ENCODE measurements at regions of chr9 and their contacts with region 1.

Region 1: DNA sequence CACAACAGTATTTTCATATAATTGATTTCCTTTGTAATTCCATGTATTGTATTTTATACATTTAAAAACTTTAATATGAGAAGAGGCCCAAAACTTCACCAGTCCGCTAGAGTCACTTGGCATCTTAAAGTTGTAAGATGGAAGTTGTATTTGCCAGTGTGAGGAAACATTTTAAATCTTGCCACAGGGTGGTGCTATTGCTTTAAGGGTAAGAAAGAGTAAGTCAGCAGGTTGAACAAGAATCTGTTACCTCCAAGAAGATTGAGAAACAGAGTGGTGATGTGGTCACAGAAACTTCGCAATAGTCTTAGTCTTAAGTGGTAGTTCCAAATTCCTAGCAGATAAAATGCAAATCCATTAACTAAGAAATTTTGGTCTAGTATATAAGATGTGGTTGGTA is 39.8 kb upstream of the RANBP6 start:
- DNase-seq: peak; percentile 58
- ATAC-seq: peak; percentile 67
- H3K4me3 Mint-ChIP-seq: no peak overlapping the region
- H3K27ac Mint-ChIP-seq: no peak overlapping the region
- H3K4me1 Mint-ChIP-seq: peaks cover 3% of the 10 kb centered on the region
- H3K27me3 Mint-ChIP-seq: peaks cover 2% of the 10 kb centered on the region
- CTCF ChIP-seq: peak; percentile 60

Region 2: DNA sequence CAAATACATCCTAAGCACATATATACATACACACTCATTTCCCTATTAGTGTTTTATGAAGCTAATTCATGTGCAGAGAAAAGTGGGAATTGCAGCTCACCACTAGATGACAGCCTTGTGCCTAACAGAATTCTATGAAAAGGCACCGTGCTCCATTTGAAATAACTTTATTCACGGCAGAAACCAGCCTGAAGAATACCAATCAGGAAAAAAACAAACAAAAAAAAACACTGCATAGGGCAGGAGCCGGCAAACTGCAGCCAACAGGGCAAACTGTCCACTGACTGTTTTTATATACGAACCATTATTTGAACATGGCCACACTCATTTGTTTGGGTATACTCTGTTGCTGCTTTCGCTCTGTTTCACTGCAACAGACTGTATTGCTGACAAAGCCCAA is 255.9 kb before region 1 on chr9:
- CTCF ChIA-PET with region 1: interaction called, 3 read pairs
- POLR2A ChIA-PET with region 1: no interaction called
- intact Hi-C with region 1: loop called (anchors 5 kb)
- DNase-seq: peak; percentile 25
- ATAC-seq: no peak
- H3K4me3 Mint-ChIP-seq: no peak overlapping the region
- H3K27ac Mint-ChIP-seq: peak overlapping the region; percentile 55
- H3K4me1 Mint-ChIP-seq: peaks cover 34% of the 10 kb centered on the region
- H3K27me3 Mint-ChIP-seq: no peaks in the 10 kb centered on the region
- CTCF ChIP-seq: peak; percentile 43

Region 3: DNA sequence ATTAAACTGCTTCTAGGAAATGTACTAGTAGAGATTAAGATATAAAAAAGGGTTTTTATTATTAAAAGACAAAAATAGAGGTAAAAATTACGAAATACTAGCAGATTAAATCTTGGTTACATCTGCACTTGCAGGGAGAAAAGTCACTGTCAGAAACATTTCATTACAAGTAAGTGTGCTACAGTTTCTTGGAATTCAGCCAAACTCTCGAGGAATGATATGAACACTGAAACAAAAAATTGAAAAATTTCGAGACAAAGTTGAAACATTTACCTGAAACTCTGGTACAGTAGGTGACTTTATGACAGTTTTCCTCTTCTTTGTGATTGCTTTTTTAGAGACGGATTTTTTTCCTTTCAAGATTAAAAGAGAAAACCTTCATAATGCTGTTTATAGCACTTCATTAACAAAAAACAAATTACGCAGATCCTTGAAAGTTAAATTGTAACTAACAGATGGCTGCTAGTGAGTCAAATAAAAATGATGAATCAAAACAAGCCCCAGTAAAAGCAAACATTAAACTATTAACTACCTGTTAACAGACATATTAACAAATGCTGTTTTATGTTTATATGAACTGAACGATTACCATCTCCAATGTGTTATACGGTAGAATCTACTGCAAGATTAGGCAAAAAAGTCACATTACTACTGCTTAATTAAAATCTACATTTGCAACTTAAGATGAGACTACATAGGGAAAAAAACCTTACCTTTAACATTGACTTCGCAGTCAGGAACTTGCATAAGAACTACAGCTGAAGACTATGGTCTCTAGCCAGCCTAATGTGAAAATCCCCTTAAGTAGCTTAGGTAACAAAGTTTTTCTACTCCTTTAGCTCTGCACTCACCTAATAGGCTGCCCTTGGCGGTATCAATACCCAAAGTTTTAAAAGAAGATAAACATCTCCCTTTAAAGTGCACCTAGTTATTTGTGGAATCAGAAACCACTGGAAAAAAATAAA is 101.2 kb before region 1 on chr9:
- CTCF ChIA-PET with region 1: no interaction called
- POLR2A ChIA-PET with region 1: no interaction called
- intact Hi-C with region 1: no loop called
- DNase-seq: no peak
- ATAC-seq: no peak
- H3K4me3 Mint-ChIP-seq: no peak overlapping the region
- H3K27ac Mint-ChIP-seq: no peak overlapping the region
- H3K4me1 Mint-ChIP-seq: peaks cover 11% of the 10 kb centered on the region
- H3K27me3 Mint-ChIP-seq: no peaks in the 10 kb centered on the region
- CTCF ChIP-seq: no peak

Region 4: GRCh38 chr9:6008169-6008979 is 46.8 kb before region 1 on chr9:
- CTCF ChIA-PET with region 1: interaction called, 14 read pairs
- POLR2A ChIA-PET with region 1: no interaction called
- intact Hi-C with region 1: no loop called
- DNase-seq: peak; percentile 97
- ATAC-seq: peak; percentile 81
- H3K4me3 Mint-ChIP-seq: peak overlapping the region; percentile 96
- H3K27ac Mint-ChIP-seq: peak overlapping the region; percentile 84
- H3K4me1 Mint-ChIP-seq: peaks cover 60% of the 10 kb centered on the region
- H3K27me3 Mint-ChIP-seq: no peaks in the 10 kb centered on the region
- CTCF ChIP-seq: no peak

Region 5: DNA sequence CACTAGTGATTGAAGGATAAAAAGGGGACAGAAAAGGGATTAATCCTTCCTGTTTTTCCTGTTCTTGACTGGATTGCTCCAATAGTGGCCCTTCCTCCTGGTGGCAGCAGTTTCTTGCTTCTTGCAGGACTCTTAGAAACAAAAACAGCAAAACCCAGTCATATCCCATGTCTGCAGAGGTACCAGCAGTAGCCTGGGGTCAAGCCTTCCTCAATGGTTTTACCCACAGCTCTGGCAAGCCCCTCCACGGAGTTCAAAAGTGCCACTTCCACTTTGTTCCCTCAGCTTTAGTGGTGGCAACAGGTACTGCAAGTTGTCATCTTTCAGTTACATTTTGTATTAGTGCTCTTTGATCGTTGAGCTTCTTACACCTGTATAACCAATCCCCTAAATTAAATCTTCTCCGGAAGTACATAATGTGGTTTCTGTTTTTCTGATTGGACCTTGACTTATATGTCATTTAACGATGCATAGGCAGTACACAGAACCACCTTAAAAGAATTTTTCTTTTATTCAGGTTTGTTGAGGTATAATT is 31.1 kb before region 1 on chr9:
- CTCF ChIA-PET with region 1: interaction called, 14 read pairs
- POLR2A ChIA-PET with region 1: no interaction called
- intact Hi-C with region 1: no loop called
- DNase-seq: peak; percentile 54
- ATAC-seq: peak; percentile 90
- H3K4me3 Mint-ChIP-seq: no peak overlapping the region
- H3K27ac Mint-ChIP-seq: no peak overlapping the region
- H3K4me1 Mint-ChIP-seq: peaks cover 5% of the 10 kb centered on the region
- H3K27me3 Mint-ChIP-seq: peaks cover 1% of the 10 kb centered on the region
- CTCF ChIP-seq: peak; percentile 73

Region 6: DNA sequence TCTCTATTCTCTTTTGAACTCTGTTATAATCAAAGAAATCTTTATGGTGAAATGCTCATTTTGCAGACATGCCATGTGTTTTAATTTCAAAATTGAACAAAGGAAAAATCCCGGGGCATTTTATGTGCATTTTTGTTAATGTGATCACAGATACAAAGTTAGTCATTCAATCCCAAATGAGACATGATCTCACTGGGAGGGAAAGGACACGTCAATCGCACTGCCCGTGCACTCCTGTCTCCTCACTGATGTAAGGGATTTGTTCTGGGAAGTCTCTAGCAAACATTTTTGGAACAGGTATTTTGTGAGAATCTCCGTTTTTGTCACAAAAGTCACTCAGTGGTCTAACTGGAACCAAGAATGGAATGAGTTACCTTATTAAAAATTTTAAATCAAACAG is 58.1 kb after region 1 on chr9:
- CTCF ChIA-PET with region 1: no interaction called
- POLR2A ChIA-PET with region 1: no interaction called
- intact Hi-C with region 1: no loop called
- DNase-seq: no peak
- ATAC-seq: no peak
- H3K4me3 Mint-ChIP-seq: no peak overlapping the region
- H3K27ac Mint-ChIP-seq: no peak overlapping the region
- H3K4me1 Mint-ChIP-seq: no peaks in the 10 kb centered on the region
- H3K27me3 Mint-ChIP-seq: no peaks in the 10 kb centered on the region
- CTCF ChIP-seq: no peak

Region 7: DNA sequence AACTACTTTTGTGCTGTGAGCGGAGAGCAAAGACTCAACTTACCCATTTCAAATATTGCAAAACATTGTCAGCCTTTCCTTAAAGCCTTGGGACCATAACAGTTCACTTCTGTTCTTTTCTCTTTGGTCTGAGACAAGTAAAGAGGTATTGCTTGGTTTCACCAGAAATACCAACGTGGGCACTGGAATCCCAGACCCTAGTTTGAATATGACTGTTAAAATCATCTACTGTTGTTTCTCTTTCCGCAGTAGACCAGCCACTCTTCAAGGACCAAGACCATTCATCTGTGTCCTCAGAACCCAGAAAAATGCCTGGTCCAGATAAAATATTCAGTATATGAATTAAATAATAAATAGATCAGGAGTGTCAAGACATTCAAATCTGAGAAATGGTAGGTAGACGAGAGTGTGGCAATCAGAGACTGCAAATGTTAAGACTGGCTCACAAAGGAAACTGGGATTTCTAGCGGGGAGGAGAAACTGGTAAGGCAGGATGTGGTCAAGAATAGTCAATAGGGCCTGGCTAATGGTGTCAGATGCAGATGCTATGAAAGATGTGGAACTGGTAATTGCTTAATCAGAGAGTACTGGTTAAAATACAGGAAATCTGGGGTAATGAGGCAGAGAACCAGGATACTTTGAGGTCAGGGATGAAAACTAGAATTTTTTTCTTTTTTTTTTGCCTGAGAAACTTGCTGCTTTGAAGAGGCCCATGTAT is 78.3 kb after region 1 on chr9:
- CTCF ChIA-PET with region 1: no interaction called
- POLR2A ChIA-PET with region 1: no interaction called
- intact Hi-C with region 1: no loop called
- DNase-seq: peak; percentile 5
- ATAC-seq: no peak
- H3K4me3 Mint-ChIP-seq: no peak overlapping the region
- H3K27ac Mint-ChIP-seq: no peak overlapping the region
- H3K4me1 Mint-ChIP-seq: peaks cover 4% of the 10 kb centered on the region
- H3K27me3 Mint-ChIP-seq: peaks cover 9% of the 10 kb centered on the region
- CTCF ChIP-seq: no peak

Region 8: DNA sequence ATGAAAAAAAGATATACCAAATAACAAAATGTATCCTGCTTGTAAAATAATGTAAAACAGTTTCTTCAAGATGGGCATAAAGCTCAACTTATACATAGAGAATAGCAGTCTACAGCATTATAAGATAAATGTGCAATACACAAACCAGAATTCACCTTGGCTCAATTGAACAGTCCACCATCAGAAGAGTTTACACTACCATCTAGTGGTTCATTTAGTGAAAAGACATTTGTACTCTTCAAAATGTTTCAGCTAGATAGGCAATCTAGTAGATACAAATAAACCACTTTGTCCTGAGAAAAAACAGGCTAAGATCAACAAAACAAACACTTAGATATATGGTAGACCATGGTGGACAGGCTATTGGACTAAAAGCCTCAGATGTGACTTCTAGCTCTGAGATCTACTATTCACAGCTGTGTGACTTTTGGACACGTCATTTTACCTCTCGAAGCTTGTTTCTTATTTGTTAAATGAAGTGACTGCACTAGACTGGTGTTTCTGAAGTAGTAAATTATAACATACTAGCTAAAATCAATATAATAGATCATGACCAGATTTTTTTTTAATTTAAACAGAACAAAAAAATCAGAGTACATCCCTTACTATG is 250.8 kb after region 1 on chr9:
- CTCF ChIA-PET with region 1: interaction called, 27 read pairs
- POLR2A ChIA-PET with region 1: no interaction called
- intact Hi-C with region 1: loop called (anchors 2 kb)
- DNase-seq: no peak
- ATAC-seq: no peak
- H3K4me3 Mint-ChIP-seq: no peak overlapping the region
- H3K27ac Mint-ChIP-seq: no peak overlapping the region
- H3K4me1 Mint-ChIP-seq: no peaks in the 10 kb centered on the region
- H3K27me3 Mint-ChIP-seq: peaks cover 3% of the 10 kb centered on the region
- CTCF ChIP-seq: peak; percentile 35